ENCODE measurements at regions of chr7 and their contacts with region 1.

Region 1: GRCh38 chr7:40405991-40406390 is 271.2 kb downstream of the SUGCT start:
- DNase-seq: no peak
- H3K4me3 Mint-ChIP-seq: no peak overlapping the region
- H3K27ac Mint-ChIP-seq: no peak overlapping the region
- H3K4me1 Mint-ChIP-seq: no peaks in the 10 kb centered on the region
- H3K27me3 Mint-ChIP-seq: no peaks in the 10 kb centered on the region
- CTCF ChIP-seq: no peak

Region 2: DNA sequence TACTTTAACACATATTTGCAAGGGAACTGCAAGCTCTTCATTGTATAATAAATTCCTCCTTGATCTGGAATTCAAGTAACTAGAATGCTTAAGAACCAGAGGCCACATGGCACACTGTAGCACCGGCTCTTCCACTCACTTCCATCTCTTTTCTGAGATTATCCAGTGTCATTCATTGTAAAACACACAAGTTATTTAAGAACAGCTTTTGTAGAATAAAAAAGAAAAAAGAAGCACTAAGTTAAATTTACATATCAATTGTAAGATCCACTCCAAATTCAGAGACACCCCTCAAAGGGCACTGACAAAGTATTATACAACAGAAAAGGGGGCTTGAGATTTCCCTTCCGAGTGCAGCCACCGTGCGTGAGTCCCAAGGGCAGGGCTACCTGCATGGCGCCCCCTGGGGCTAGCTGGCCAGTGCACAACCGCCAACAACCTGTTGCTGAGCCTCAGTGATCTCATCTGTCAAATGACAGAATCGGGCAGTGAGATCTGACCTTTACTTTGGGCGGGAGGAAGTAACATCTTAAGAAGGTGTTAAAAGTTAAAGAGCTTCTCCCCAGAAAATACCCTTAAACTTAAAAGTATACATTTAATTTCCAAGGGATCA is 1818.5 kb after region 1 on chr7:
- CTCF ChIA-PET with region 1: interaction called, 11 read pairs
- intact Hi-C with region 1: no loop called
- DNase-seq: no peak
- H3K4me3 Mint-ChIP-seq: no peak overlapping the region
- H3K27ac Mint-ChIP-seq: no peak overlapping the region
- H3K4me1 Mint-ChIP-seq: no peaks in the 10 kb centered on the region
- H3K27me3 Mint-ChIP-seq: peaks cover 64% of the 10 kb centered on the region
- CTCF ChIP-seq: no peak